Activated naive CD8-positive, alpha-beta T cell treated with anti-CD3 and anti-CD28 coated beads, Interleukin-2, amount 10 ng/mL, durations not matched to agents 7 days and 5 days (primary cell): ENCODE measurements at regions of chr2 and their contacts with region 1.

Region 1: DNA sequence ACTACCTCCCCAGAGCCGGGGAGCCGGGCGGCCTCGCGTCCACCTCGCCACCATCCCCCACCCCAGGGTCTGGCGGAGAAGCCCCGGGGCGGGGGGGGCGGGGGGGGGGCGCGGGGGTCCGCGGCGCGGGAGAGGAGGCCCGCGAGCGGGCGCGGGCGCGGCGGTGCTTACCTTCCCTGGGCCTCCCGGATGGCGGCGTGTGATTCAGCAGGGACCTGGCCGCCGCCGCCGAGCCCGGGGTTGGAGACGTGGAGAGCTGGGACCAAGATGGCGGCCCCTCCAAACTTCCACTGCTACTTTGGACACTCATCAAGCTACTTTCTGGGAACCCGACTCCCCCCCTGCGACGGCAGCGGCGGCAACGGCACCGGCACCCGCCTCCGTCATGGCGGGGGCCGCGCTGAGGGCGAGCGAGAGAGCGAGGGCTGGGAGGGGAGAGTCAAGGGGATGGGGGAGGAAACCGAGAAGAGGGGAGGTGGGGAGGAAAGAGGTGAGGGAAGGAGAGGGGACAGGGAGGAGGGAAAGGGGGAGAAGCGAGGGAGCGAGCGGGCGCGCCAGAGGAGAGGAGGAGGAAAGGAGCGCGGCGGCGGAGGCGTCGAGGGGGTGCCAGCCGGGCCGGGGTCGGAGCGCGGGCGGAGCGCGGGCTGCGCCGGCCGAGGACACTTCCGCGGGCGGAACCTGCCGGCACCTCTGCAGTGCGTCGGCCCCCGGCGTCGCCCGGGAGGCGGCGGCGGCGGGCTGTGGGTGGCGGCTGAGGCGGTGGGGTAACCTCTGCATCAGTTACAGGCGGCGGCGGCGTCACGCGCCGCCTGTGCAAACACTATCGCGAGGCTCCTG is at the start of gene TLK1:
- DNase-seq: peak; percentile 80
- ATAC-seq: peak; percentile 68
- H3K4me3 Mint-ChIP-seq: peak within 1 kb of the TSS; percentile 99
- H3K27ac Mint-ChIP-seq: peak within 1 kb of the TSS; percentile 96
- H3K4me1 Mint-ChIP-seq: peaks cover 56% of the 10 kb centered on the region
- H3K27me3 Mint-ChIP-seq: no peaks in the 10 kb centered on the region
- total RNA-seq, gene TLK1: 89.9 to 91.5 TPM

Region 2: GRCh38 chr2:171180229-171180930 is 20.0 kb after region 1 on chr2:
- POLR2A ChIA-PET with region 1: no interaction called
- DNase-seq: no peak
- ATAC-seq: no peak
- H3K4me3 Mint-ChIP-seq: no peak overlapping the region
- H3K27ac Mint-ChIP-seq: no peak overlapping the region
- H3K4me1 Mint-ChIP-seq: peaks cover 5% of the 10 kb centered on the region
- H3K27me3 Mint-ChIP-seq: peaks cover 16% of the 10 kb centered on the region

Region 3: DNA sequence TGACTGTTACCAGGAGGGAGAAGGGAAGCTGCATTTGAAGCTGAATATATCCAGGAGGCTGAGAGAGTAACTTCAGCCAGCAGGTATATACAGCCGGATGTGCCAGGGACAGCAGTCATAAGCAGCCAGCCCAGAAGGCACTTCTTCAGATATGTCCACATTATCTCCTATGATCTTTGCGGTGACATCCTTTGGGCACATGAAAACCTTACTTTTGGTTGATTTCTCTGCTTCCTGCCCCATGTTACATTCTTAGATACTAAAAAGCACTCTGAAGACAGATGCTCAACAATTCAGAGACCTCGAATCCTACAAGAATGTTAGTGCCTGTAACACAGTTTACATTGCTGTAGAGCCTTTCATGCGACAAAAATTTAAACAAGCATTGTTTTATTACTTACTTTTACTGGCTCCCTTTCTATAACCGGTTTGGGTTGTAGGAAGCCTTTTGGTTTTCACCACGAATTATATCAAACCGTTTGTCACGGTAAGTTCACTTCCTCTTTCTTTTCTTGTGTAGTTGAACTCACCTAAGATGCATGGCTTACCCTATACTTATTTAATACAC is 50.6 kb after region 1 on chr2:
- POLR2A ChIA-PET with region 1: interaction called, 10 read pairs
- DNase-seq: peak; percentile 37
- ATAC-seq: peak; percentile 97
- H3K4me3 Mint-ChIP-seq: peak overlapping the region; percentile 70
- H3K27ac Mint-ChIP-seq: peak overlapping the region; percentile 95
- H3K4me1 Mint-ChIP-seq: peaks cover 23% of the 10 kb centered on the region
- H3K27me3 Mint-ChIP-seq: no peaks in the 10 kb centered on the region

Region 4: GRCh38 chr2:171247741-171248662 is 87.7 kb after region 1 on chr2:
- POLR2A ChIA-PET with region 1: interaction called, 14 read pairs
- DNase-seq: peak; percentile 33
- ATAC-seq: peak; percentile 95
- H3K4me3 Mint-ChIP-seq: peak overlapping the region; percentile 76
- H3K27ac Mint-ChIP-seq: peak overlapping the region; percentile 76
- H3K4me1 Mint-ChIP-seq: peaks cover 28% of the 10 kb centered on the region
- H3K27me3 Mint-ChIP-seq: no peaks in the 10 kb centered on the region